Heart right ventricle (tissue), 16 donors: ENCODE measurements at regions of chr18 and their contacts with region 1.

Region 1: DNA sequence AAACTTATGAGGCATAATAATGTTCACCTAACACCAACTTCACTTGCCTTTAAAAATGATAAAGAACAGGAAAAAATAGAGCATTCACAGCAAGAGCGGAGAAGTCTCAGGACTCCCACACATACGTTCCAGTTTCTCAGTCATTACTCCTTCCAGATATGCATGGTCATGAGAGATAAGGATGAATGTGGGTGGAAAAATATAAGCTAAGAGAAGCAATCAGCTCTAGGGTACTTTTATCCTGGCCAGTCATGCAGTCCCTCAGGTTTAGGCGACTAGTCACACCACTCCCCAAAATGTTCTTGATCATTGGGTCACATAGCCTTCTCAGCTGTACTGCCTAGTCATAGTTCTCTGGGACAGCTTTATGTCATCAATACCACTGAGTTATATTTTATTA is 29.2 kb upstream of the CCDC178 start:
- DNase-seq: no peak
- ATAC-seq: no peak
- H3K4me3 ChIP-seq: no peak overlapping the region
- H3K27ac ChIP-seq: no peak overlapping the region
- H3K4me1 ChIP-seq: no peaks in the 10 kb centered on the region
- H3K27me3 ChIP-seq: no peaks in the 10 kb centered on the region
- CTCF ChIP-seq: no peak

Region 2: GRCh38 chr18:32983721-32984120 is 486.0 kb before region 1 on chr18:
- intact Hi-C with region 1: no loop called
- DNase-seq: no peak
- ATAC-seq: no peak
- H3K4me3 ChIP-seq: no peak overlapping the region
- H3K27ac ChIP-seq: no peak overlapping the region
- H3K4me1 ChIP-seq: no peaks in the 10 kb centered on the region
- H3K27me3 ChIP-seq: no peaks in the 10 kb centered on the region
- CTCF ChIP-seq: no peak

Region 3: DNA sequence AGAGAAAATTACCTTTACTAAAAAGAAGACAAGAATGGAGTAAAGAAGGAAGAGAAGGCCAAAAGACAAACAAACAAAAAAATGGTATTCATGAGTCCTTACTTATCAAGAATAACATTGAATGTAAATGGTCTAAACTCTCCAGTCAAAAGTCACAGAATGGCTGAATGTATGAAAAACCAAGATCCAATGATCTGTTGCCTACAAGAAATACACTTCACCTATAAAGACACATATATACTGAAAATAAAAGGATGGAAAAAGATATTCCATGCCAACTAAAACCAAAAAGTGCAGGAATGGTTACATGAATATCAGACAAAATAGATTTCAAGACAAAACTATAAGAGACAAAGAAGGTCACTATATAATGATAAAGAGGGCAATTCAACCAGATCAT is 43.3 kb after region 1 on chr18:
- intact Hi-C with region 1: loop called in 1 of 10 experiments (anchors 5 kb)
- DNase-seq: no peak
- ATAC-seq: no peak
- H3K4me3 ChIP-seq: no peak overlapping the region
- H3K27ac ChIP-seq: no peak overlapping the region
- H3K4me1 ChIP-seq: no peaks in the 10 kb centered on the region
- H3K27me3 ChIP-seq: no peaks in the 10 kb centered on the region
- CTCF ChIP-seq: no peak